PC-9 (cell line): ENCODE measurements at regions of chr10 and their contacts with region 1.

Region 1: GRCh38 chr10:57338823-57339558 is 928.7 kb downstream of the IPMK start:
- DNase-seq: peak in 1 of 2 experiments; percentile 37
- H3K4me3 ChIP-seq: no peak overlapping the region
- H3K27ac ChIP-seq: no peak overlapping the region
- H3K4me1 ChIP-seq: no peaks in the 10 kb centered on the region
- H3K27me3 ChIP-seq: no peaks in the 10 kb centered on the region
- CTCF ChIP-seq: peak; percentile 92

Region 2: GRCh38 chr10:57657164-57657765 is 318.3 kb after region 1 on chr10:
- CTCF ChIA-PET with region 1: no interaction called
- POLR2A ChIA-PET with region 1: no interaction called
- intact Hi-C with region 1: loop called (anchors 1 kb)
- DNase-seq: peak; percentile 43 to 47
- H3K4me3 ChIP-seq: no peak overlapping the region
- H3K27ac ChIP-seq: no peak overlapping the region
- H3K4me1 ChIP-seq: no peaks in the 10 kb centered on the region
- H3K27me3 ChIP-seq: no peaks in the 10 kb centered on the region
- CTCF ChIP-seq: peak; percentile 89

Region 3: GRCh38 chr10:57849691-57850357 is 510.8 kb after region 1 on chr10:
- CTCF ChIA-PET with region 1: no interaction called
- POLR2A ChIA-PET with region 1: no interaction called
- intact Hi-C with region 1: loop called (anchors 10 kb)
- DNase-seq: no peak
- H3K4me3 ChIP-seq: no peak overlapping the region
- H3K27ac ChIP-seq: no peak overlapping the region
- H3K4me1 ChIP-seq: no peaks in the 10 kb centered on the region
- H3K27me3 ChIP-seq: no peaks in the 10 kb centered on the region
- CTCF ChIP-seq: peak; percentile 75

Region 4: GRCh38 chr10:58064714-58065528 is 725.9 kb after region 1 on chr10:
- CTCF ChIA-PET with region 1: no interaction called
- POLR2A ChIA-PET with region 1: no interaction called
- intact Hi-C with region 1: loop called (anchors 1 kb)
- DNase-seq: peak in 1 of 2 experiments; percentile 22
- H3K4me3 ChIP-seq: no peak overlapping the region
- H3K27ac ChIP-seq: no peak overlapping the region
- H3K4me1 ChIP-seq: no peaks in the 10 kb centered on the region
- H3K27me3 ChIP-seq: no peaks in the 10 kb centered on the region; the same call in 1 of the 2 replicates
- CTCF ChIP-seq: peak; percentile 86

Region 5: GRCh38 chr10:58152673-58153263 is 813.8 kb after region 1 on chr10:
- CTCF ChIA-PET with region 1: no interaction called
- POLR2A ChIA-PET with region 1: no interaction called
- intact Hi-C with region 1: loop called (anchors 5 kb)
- DNase-seq: peak in 1 of 2 experiments; percentile 45
- H3K4me3 ChIP-seq: no peak overlapping the region
- H3K27ac ChIP-seq: no peak overlapping the region
- H3K4me1 ChIP-seq: no peaks in the 10 kb centered on the region
- H3K27me3 ChIP-seq: no peaks in the 10 kb centered on the region
- CTCF ChIP-seq: peak; percentile 72

Region 6: GRCh38 chr10:58299580-58299979 is 960.6 kb after region 1 on chr10:
- CTCF ChIA-PET with region 1: no interaction called
- POLR2A ChIA-PET with region 1: no interaction called
- intact Hi-C with region 1: loop called (anchors 10 kb)
- DNase-seq: peak; percentile 48 to 54
- H3K4me3 ChIP-seq: no peak overlapping the region
- H3K27ac ChIP-seq: no peak overlapping the region
- H3K4me1 ChIP-seq: no peaks in the 10 kb centered on the region
- H3K27me3 ChIP-seq: no peaks in the 10 kb centered on the region
- CTCF ChIP-seq: peak; percentile 98